ENCODE measurements at regions of chr16 and their contacts with region 1.

Region 1: GRCh38 chr16:25111403-25112166 is at the start of gene LCMT1:
- DNase-seq: peak; percentile 97
- ATAC-seq: peak; percentile 87
- H3K4me3 ChIP-seq: peak within 1 kb of the TSS; percentile 85
- H3K27ac ChIP-seq: peak within 1 kb of the TSS; percentile 72
- H3K4me1 ChIP-seq: peaks cover 9% of the 10 kb centered on the region; the same call in 1 of the 2 replicates
- H3K27me3 ChIP-seq: no peaks in the 10 kb centered on the region
- CTCF ChIP-seq: no peak
- EP300 ChIP-seq: no peak
- POLR2A ChIP-seq: peak; percentile 82
- RAD21 ChIP-seq: no peak
- polyA plus RNA-seq, gene LCMT1: 34.1 to 37.8 TPM

Region 2: GRCh38 chr16:24834459-24835335 is 276.9 kb before region 1 on chr16:
- CTCF ChIA-PET with region 1: interaction called, 4 read pairs
- POLR2A ChIA-PET with region 1: no interaction called
- RAD21 ChIA-PET with region 1: no interaction called
- SMC1A ChIA-PET with region 1: interaction called, 4 read pairs
- in situ Hi-C with region 1: no loop called
- intact Hi-C with region 1: loop called (anchors 10 kb)
- DNase-seq: no peak
- ATAC-seq: peak; percentile 85
- H3K4me3 ChIP-seq: no peak overlapping the region
- H3K27ac ChIP-seq: no peak overlapping the region
- H3K4me1 ChIP-seq: no peaks in the 10 kb centered on the region
- H3K27me3 ChIP-seq: no peaks in the 10 kb centered on the region
- CTCF ChIP-seq: peak; percentile 56 to 69 (median 62); a peak in 5 of 6 replicates
- EP300 ChIP-seq: no peak
- POLR2A ChIP-seq: no peak
- RAD21 ChIP-seq: peak; percentile 57

Region 3: DNA sequence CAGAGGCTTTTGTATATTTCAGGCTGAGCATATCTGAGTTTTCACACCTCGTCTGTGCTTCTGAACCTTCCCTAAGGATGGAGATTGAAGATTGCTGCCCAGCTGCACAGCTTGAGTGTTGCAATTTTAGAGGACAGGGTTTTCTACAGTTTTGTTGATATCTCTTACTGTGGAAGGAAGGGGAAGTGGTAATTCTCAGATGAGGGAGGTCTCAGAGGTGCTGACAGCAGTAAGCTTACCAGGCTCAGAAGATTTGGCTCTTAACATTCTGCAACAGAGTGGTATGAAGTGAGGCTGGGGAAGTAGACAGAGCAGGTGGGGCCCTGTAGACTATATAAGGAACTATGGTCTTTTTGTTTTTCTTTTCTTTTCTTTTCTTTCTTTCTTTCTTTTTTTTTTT is 50.7 kb before region 1 on chr16:
- CTCF ChIA-PET with region 1: interaction called, 53 read pairs
- POLR2A ChIA-PET with region 1: interaction called, 11 read pairs
- RAD21 ChIA-PET with region 1: interaction called, 35 read pairs
- SMC1A ChIA-PET with region 1: interaction called, 84 read pairs
- in situ Hi-C with region 1: no loop called
- intact Hi-C with region 1: loop called (anchors 1 kb)
- DNase-seq: no peak
- ATAC-seq: peak; percentile 69
- H3K4me3 ChIP-seq: no peak overlapping the region
- H3K27ac ChIP-seq: no peak overlapping the region
- H3K4me1 ChIP-seq: peaks cover 18% of the 10 kb centered on the region
- H3K27me3 ChIP-seq: no peaks in the 10 kb centered on the region
- CTCF ChIP-seq: no peak
- EP300 ChIP-seq: no peak
- POLR2A ChIP-seq: no peak
- RAD21 ChIP-seq: no peak

Region 4: GRCh38 chr16:25066747-25067631 is 44.6 kb before region 1 on chr16:
- CTCF ChIA-PET with region 1: interaction called, 31 read pairs
- POLR2A ChIA-PET with region 1: interaction called, 11 read pairs
- RAD21 ChIA-PET with region 1: interaction called, 12 read pairs
- SMC1A ChIA-PET with region 1: interaction called, 84 read pairs
- in situ Hi-C with region 1: no loop called
- intact Hi-C with region 1: loop called (anchors 1 kb)
- DNase-seq: no peak
- ATAC-seq: peak; percentile 98
- H3K4me3 ChIP-seq: peak overlapping the region; percentile 69
- H3K27ac ChIP-seq: peak overlapping the region; percentile 58
- H3K4me1 ChIP-seq: peaks cover 22% of the 10 kb centered on the region
- H3K27me3 ChIP-seq: peaks cover 0 to 2% of the 10 kb centered on the region in 2 experiments; a peak in 1 of 4 replicates
- CTCF ChIP-seq: no peak
- EP300 ChIP-seq: no peak
- POLR2A ChIP-seq: peak; percentile 71
- RAD21 ChIP-seq: no peak

Region 5: DNA sequence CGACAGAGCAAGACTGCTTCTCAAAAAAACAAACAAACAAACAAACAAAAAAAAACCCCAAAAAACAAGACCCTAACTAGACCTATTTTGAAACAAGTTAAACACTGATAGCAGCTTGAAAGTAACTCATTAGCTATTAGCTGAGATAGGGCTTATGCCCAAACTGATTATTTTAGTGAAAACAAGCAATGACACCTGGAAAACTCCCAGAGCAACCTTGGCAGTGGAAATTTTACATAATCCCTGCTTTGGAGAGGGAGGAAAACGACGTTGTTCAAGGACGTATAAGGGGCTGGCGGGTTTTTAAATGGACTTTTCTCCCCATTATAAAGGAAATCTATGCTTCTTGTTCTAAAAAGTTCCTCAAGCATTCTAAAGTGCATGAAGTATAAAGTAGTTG is 59.8 kb after region 1 on chr16:
- CTCF ChIA-PET with region 1: no interaction called
- POLR2A ChIA-PET with region 1: no interaction called
- RAD21 ChIA-PET with region 1: no interaction called
- SMC1A ChIA-PET with region 1: no interaction called
- in situ Hi-C with region 1: no loop called
- intact Hi-C with region 1: no loop called
- DNase-seq: no peak
- ATAC-seq: no peak
- H3K4me3 ChIP-seq: no peak overlapping the region
- H3K27ac ChIP-seq: no peak overlapping the region
- H3K4me1 ChIP-seq: no peaks in the 10 kb centered on the region
- H3K27me3 ChIP-seq: no peaks in the 10 kb centered on the region
- CTCF ChIP-seq: no peak
- EP300 ChIP-seq: no peak
- POLR2A ChIP-seq: no peak
- RAD21 ChIP-seq: no peak

Region 6: DNA sequence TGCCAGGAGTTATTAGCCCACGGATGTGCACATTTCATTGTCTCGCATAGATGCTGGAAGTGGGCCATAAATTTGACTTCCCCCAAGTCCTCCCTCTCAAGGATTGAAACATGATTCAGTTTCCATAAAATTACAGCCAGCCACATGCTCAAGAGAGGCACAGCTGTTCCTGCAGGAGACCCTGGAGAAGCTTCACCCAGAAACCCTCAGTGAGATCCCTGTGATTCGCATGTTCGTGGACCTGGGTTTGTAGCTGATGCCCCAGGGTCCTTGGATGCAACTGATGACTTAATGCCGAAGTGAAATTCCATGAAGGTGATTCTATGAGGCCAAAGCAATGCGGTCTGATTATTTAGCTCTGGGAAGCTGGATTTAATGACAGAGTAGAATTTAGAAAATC is 80.5 kb after region 1 on chr16:
- CTCF ChIA-PET with region 1: no interaction called
- POLR2A ChIA-PET with region 1: no interaction called
- RAD21 ChIA-PET with region 1: no interaction called
- SMC1A ChIA-PET with region 1: no interaction called
- in situ Hi-C with region 1: no loop called
- intact Hi-C with region 1: no loop called
- DNase-seq: no peak
- ATAC-seq: no peak
- H3K4me3 ChIP-seq: no peak overlapping the region
- H3K27ac ChIP-seq: no peak overlapping the region
- H3K4me1 ChIP-seq: no peaks in the 10 kb centered on the region
- H3K27me3 ChIP-seq: no peaks in the 10 kb centered on the region
- CTCF ChIP-seq: no peak
- EP300 ChIP-seq: no peak
- POLR2A ChIP-seq: no peak
- RAD21 ChIP-seq: no peak

Measured in GM12878 (cell line).